Activated T-helper 1 cell treated with anti-CD3 and anti-CD28 coated beads, Interleukin-12 subunit alpha, Interleukin-12 subunit beta, Interleukin-2, Interleukin-4 antibody, amounts not matched to agents 30 ng/mL and 10 ng/mL and 1 ng/mL, durations not matched to agents 14 hours and 24 hours and 36 hours (primary cell): ENCODE measurements at regions of chr6 and their contacts with region 1.

Region 1: GRCh38 chr6:26216356-26216885 is 129.2 kb downstream of the HFE start:
- DNase-seq: peak; percentile 86
- H3K4me3 Mint-ChIP-seq: no peak overlapping the region
- H3K27ac Mint-ChIP-seq: no peak overlapping the region
- H3K4me1 Mint-ChIP-seq: peaks cover 11% of the 10 kb centered on the region
- H3K27me3 Mint-ChIP-seq: no peaks in the 10 kb centered on the region

Region 2: DNA sequence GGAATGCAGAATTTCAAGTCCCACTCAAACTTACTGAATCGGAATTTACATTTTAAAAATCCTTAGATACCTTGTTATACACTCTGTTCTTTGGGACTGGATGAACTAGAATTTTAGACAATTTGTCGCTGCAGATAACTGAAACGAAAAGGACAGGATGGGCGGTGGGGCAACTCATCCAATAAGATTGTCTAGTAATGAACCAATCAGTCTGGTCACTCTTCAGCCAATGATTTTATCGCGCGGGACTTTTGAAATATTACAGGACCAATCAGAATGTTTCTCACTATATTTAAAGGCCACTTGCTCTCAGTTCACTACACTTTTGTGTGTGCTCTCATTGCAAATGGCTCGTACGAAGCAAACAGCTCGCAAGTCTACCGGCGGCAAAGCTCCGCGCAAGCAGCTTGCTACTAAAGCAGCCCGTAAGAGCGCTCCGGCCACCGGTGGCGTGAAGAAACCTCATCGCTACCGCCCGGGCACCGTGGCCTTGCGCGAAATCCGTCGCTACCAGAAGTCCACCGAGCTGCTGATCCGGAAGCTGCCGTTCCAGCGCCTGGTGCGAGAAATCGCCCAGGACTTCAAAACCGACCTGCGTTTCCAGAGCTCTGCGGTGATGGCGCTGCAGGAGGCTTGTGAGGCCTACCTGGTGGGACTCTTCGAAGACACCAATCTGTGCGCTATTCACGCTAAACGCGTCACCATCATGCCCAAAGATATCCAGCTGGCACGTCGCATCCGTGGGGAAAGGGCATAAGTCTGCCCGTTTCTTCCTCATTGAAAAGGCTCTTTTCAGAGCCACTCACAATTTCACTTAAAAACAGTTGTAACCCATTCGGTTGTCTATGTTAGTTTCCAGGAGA is 171.1 kb before region 1 on chr6:
- intact Hi-C with region 1: loop called (anchors 2 kb)
- DNase-seq: peak; percentile 82
- H3K4me3 Mint-ChIP-seq: peak overlapping the region; percentile 86
- H3K27ac Mint-ChIP-seq: peak overlapping the region; percentile 98
- H3K4me1 Mint-ChIP-seq: peaks cover 49% of the 10 kb centered on the region
- H3K27me3 Mint-ChIP-seq: no peaks in the 10 kb centered on the region

Region 3: GRCh38 chr6:26196846-26197648 is 19.4 kb before region 1 on chr6:
- intact Hi-C with region 1: loop called (anchors 1 kb)
- DNase-seq: peak; percentile 84
- H3K4me3 Mint-ChIP-seq: peak overlapping the region; percentile 92
- H3K27ac Mint-ChIP-seq: peak overlapping the region; percentile 95
- H3K4me1 Mint-ChIP-seq: peaks cover 54% of the 10 kb centered on the region
- H3K27me3 Mint-ChIP-seq: no peaks in the 10 kb centered on the region

Region 4: DNA sequence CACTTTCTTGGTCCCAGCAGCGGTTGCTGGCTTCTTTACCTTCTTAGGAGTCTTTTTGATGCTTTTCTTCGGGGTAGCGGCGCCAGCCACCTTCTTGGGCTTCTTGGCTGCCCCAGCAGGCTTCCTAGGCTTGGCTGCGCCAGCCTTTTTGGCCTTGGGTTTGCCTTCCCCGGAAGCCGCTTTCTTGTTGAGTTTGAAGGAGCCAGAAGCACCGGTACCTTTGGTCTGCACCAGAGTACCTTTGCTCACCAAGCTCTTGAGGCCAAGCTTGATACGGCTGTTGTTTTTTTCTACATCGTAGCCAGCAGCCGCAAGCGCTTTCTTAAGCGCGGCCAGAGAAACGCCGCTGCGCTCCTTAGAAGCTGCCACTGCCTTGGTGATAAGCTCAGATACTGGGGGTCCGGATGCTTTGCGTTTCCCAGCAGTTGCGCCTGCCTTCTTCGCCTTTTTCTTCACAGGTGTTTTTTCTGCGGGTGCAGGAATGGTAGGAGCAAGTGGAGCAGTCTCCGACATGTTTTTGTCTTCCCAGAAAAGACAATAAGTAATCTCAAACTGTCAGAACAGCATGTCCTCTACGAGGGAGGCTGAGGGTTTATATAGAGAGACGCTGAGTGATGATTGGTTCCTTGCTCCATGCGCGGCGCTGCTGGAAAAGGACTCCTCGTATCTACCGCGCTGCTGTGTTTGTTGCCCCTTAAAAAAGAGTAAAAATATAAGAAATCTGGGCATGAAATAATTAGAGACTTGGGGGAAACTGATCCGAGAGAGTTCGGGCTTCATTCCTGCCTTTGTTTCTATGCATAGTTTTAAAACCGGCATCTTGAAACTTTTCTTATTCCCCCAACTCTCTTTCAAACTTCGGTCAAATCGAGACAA is 18.2 kb after region 1 on chr6:
- intact Hi-C with region 1: loop called (anchors 1 kb)
- DNase-seq: peak; percentile 79
- H3K4me3 Mint-ChIP-seq: peak overlapping the region; percentile 89
- H3K27ac Mint-ChIP-seq: peak overlapping the region; percentile 100
- H3K4me1 Mint-ChIP-seq: peaks cover 52% of the 10 kb centered on the region
- H3K27me3 Mint-ChIP-seq: no peaks in the 10 kb centered on the region

Region 5: DNA sequence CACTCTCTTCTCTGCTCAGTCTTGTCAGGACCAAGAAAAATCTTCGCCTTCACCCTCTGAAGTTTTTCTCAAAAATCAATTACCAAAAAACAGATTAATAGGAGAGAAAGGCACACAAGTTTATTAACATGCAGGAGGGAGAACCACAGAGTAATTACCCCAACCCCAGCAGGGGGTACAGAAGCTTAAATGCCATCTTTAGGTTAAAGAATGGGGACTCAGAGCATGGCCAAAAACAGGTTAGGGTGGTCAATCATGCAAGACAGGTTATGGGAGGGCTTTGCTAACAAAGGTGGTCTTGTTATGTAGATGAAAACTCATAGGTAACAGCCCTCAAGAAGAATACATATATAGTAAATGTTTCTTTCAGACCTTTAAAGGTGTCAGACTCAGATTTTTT is 48.1 kb after region 1 on chr6:
- intact Hi-C with region 1: no loop called
- DNase-seq: no peak
- H3K4me3 Mint-ChIP-seq: no peak overlapping the region
- H3K27ac Mint-ChIP-seq: no peak overlapping the region
- H3K4me1 Mint-ChIP-seq: peaks cover 13% of the 10 kb centered on the region
- H3K27me3 Mint-ChIP-seq: peaks cover 3% of the 10 kb centered on the region

Region 6: GRCh38 chr6:26342106-26343004 is 125.9 kb after region 1 on chr6:
- intact Hi-C with region 1: no loop called
- DNase-seq: no peak
- H3K4me3 Mint-ChIP-seq: peak overlapping the region; percentile 84
- H3K27ac Mint-ChIP-seq: peak overlapping the region; percentile 53
- H3K4me1 Mint-ChIP-seq: peaks cover 27% of the 10 kb centered on the region
- H3K27me3 Mint-ChIP-seq: peaks cover 7% of the 10 kb centered on the region

Region 7: DNA sequence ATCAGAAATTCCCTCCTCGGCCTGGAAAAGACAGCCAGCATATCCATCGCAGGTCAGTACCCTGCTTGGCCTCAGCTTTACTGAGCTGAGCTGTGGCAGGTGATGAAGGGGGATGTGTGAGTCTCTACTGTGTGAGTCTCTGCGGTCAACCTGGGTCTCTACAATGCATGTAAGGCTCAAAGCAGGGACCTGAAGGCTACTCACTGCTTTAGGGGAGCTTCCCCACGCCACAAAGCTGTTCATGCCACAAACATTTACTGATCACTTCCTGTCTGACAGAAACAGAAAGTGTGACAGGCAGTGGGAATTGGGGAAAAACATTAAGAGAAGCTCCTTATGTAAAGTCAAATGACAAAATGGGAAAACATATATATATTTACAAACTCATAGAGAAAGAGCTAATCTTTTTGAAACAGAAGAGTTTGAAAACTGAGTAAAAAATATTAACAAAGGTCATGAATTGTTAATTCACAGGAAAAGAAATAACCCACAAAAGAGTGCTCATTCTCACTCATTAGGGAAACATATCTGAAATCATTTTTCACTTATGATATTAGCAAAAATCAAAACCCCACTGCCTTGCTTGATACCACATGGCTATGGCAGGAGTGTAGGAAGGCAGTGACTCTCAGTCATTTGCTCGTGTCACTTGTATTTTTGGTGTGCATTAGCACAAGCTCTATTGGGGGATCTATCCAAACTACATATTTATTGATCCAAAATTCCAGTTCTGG is 229.7 kb after region 1 on chr6:
- intact Hi-C with region 1: no loop called
- DNase-seq: no peak
- H3K4me3 Mint-ChIP-seq: peak overlapping the region; percentile 28
- H3K27ac Mint-ChIP-seq: peak overlapping the region; percentile 46
- H3K4me1 Mint-ChIP-seq: peaks cover 52% of the 10 kb centered on the region
- H3K27me3 Mint-ChIP-seq: no peaks in the 10 kb centered on the region

Region 8: GRCh38 chr6:27452496-27452897 is 1236.1 kb after region 1 on chr6:
- intact Hi-C with region 1: no loop called
- DNase-seq: no peak
- H3K4me3 Mint-ChIP-seq: no peak overlapping the region
- H3K27ac Mint-ChIP-seq: no peak overlapping the region
- H3K4me1 Mint-ChIP-seq: no peaks in the 10 kb centered on the region
- H3K27me3 Mint-ChIP-seq: no peaks in the 10 kb centered on the region

Region 9: DNA sequence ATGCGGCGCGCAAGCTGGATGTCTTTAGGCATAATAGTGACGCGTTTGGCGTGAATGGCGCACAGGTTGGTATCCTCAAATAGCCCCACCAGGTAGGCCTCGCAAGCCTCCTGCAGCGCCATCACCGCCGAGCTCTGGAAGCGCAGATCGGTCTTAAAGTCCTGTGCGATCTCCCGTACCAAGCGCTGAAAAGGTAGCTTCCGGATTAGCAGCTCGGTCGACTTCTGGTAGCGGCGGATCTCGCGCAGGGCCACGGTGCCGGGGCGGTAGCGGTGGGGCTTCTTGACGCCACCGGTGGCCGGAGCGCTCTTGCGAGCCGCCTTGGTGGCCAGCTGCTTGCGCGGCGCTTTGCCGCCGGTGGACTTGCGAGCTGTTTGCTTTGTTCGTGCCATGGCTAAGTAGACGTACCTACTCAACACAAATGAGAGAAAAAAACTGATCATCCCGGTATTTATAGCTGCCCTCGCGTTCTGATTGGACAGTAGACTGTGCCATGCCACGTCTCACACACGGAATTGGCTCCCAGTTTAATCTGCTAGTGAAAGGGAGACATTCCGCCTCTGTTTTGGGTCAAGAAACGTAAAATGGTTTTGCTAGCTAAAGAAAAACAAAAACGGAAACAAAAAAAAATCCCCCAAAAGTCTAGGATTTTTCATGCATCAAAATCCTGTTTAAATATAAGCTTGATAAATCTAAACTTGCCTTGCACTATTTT is 1655.7 kb after region 1 on chr6:
- intact Hi-C with region 1: loop called (anchors 2 kb)
- DNase-seq: peak; percentile 87
- H3K4me3 Mint-ChIP-seq: peak overlapping the region; percentile 88
- H3K27ac Mint-ChIP-seq: peak overlapping the region; percentile 96
- H3K4me1 Mint-ChIP-seq: peaks cover 63% of the 10 kb centered on the region
- H3K27me3 Mint-ChIP-seq: no peaks in the 10 kb centered on the region